Activated T-helper 1 cell treated with anti-CD3 and anti-CD28 coated beads, Interleukin-12 subunit alpha, Interleukin-12 subunit beta, Interleukin-2, Interleukin-4 antibody, amounts not matched to agents 30 ng/mL and 10 ng/mL and 1 ng/mL, durations not matched to agents 14 hours and 24 hours and 36 hours (primary cell): ENCODE measurements at regions of chr11 and their contacts with region 1.

Region 1: DNA sequence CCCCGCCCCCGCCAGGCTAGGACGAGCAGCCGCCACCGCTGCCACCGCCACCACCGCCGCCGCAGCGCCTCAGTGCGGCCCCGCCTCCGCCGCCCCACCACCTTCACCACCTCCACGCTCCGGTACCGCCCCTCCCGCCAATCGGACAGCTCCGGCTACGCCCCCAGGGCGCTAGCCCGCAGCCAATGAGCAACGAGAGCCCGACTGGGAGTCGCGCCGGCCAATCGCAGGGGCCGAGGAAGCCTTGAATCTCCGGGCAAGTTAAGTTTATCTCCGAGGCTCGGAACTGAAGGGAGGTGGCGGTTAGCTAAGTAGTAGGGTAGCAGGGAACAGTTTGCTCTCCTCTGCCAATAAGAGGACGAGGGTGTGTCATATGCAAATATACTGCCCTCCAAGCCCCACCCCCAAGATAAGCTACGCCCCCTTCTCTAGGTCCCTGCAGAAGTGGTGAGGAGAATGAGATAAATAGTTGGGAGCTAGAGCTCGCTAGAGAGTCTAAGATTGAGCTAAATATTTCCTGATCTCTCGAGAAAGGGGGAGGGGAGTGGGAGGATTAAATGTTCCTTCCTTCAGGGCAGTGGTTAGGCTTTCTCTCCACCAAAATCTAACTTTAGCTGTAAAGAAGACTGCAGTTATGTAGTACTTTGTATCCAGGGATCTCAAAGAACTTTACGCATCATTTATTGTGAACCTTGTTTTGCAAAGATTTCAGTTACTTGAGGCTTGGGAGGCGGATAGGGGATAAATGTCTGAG is at the start of gene SESN3:
- DNase-seq: peak; percentile 98
- H3K4me3 Mint-ChIP-seq: peak within 1 kb of the TSS; percentile 96
- H3K27ac Mint-ChIP-seq: peak within 1 kb of the TSS; percentile 88
- H3K4me1 Mint-ChIP-seq: peaks cover 18% of the 10 kb centered on the region
- H3K27me3 Mint-ChIP-seq: peaks cover 2% of the 10 kb centered on the region
- total RNA-seq, gene SESN3: 62.0 and 68.6 TPM in 2 replicates

Region 2: GRCh38 chr11:94128746-94129511 is 1102.4 kb before region 1 on chr11 and contains the start of gene PANX1:
- intact Hi-C with region 1: loop called (anchors 5 kb)
- DNase-seq: peak; percentile 73
- H3K4me3 Mint-ChIP-seq: no peak within 1 kb of the TSS
- H3K27ac Mint-ChIP-seq: peak within 1 kb of the TSS; percentile 88
- H3K4me1 Mint-ChIP-seq: peaks cover 20% of the 10 kb centered on the region
- H3K27me3 Mint-ChIP-seq: no peaks in the 10 kb centered on the region
- total RNA-seq, gene PANX1: 20.8 and 21.9 TPM in 2 replicates

Region 3: DNA sequence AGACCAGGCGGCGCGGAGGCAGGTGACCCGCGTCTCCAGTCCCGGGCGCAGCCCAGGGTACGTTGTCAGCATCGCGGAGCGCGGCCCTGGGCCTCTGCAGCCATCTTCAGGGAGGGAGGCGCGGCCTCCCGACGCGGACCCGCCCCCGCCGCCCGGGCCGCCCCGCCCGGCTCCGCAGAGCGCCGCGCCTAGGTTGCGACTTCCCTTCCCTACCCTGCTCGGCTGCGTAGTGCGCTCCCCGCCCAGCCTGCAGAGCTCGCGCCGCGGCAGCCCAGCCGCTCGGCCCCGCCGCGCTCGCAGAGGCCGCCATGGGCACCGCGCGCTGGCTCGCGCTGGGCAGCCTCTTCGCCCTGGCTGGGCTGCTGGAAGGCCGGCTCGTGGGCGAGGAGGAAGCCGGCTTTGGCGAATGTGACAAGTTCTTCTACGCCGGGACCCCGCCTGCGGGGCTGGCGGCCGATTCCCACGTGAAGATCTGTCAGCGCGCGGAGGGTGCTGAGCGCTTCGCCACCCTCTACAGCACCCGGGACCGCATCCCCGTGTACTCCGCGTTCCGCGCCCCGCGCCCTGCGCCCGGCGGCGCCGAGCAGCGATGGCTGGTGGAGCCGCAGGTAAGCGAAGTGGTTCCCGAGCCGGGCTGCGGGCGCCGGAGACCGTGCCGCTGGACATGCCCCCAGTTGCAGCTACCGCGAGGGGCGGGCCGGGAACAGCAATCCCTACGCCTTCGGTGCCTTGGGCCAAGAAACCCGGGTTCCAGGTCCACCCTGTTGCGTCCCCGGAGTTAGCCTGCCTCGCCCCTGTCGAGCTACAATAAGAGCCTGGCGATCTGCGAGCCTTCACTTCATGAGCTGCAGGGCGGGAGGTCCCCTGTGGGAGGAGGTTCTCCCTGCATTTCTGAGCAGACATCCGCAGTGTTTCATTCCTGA is 141.4 kb before region 1 on chr11 and contains the start of gene ENDOD1:
- intact Hi-C with region 1: loop called (anchors 1 kb)
- DNase-seq: peak; percentile 85
- H3K4me3 Mint-ChIP-seq: peak within 1 kb of the TSS; percentile 89
- H3K27ac Mint-ChIP-seq: peak within 1 kb of the TSS; percentile 96
- H3K4me1 Mint-ChIP-seq: peaks cover 83% of the 10 kb centered on the region
- H3K27me3 Mint-ChIP-seq: no peaks in the 10 kb centered on the region
- total RNA-seq, gene ENDOD1: 33.8 and 34.3 TPM in 2 replicates

Region 4: DNA sequence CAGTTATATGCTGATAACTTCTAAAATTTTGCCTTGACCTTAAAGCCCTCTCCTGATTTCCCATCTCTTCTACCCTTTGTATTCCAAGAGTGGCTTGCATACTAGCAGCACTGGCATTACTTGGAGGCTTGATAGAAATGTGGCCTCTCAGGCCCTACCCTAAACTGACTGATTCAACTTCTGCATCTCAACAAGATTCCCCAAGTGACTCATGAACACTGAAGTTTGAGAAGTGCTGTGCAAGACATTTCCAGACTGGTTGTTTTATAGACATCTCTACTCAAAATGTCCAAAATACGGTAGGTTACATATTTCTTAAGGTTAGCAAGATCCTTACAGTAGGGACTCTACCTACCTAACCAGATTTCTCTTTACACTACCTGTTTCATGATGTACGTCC is 48.9 kb before region 1 on chr11:
- intact Hi-C with region 1: no loop called
- DNase-seq: no peak
- H3K4me3 Mint-ChIP-seq: no peak overlapping the region
- H3K27ac Mint-ChIP-seq: no peak overlapping the region
- H3K4me1 Mint-ChIP-seq: peaks cover 7% of the 10 kb centered on the region
- H3K27me3 Mint-ChIP-seq: no peaks in the 10 kb centered on the region

Region 5: GRCh38 chr11:95296621-95297025 is 65.3 kb after region 1 on chr11:
- intact Hi-C with region 1: loop called (anchors 5 kb)
- DNase-seq: no peak
- H3K4me3 Mint-ChIP-seq: no peak overlapping the region
- H3K27ac Mint-ChIP-seq: no peak overlapping the region
- H3K4me1 Mint-ChIP-seq: peaks cover 24% of the 10 kb centered on the region
- H3K27me3 Mint-ChIP-seq: no peaks in the 10 kb centered on the region

Region 6: DNA sequence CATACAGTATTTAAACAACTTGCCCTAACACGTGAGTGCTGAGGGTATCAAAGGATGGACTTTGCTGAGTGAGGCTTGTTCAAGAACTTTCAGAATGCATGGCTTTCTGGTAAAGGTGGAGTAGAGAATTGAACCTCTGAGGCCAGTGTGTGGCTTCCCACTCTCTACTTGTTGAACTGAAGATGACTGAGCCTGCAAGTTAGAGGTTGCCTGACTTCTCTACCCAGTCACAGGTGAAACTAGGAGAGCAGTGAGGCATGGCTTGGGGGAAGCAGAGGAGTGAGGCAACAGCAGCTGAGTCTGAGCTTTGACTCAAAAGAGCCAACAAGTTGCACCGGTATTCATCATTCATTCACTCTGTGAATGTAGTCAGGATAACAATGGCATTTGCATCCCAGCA is 256.1 kb after region 1 on chr11:
- intact Hi-C with region 1: no loop called
- DNase-seq: no peak
- H3K4me3 Mint-ChIP-seq: no peak overlapping the region
- H3K27ac Mint-ChIP-seq: no peak overlapping the region
- H3K4me1 Mint-ChIP-seq: peaks cover 11% of the 10 kb centered on the region
- H3K27me3 Mint-ChIP-seq: peaks cover 13% of the 10 kb centered on the region

Region 7: GRCh38 chr11:95705485-95706124 is 474.3 kb after region 1 on chr11:
- intact Hi-C with region 1: loop called (anchors 1 kb)
- DNase-seq: peak; percentile 77
- H3K4me3 Mint-ChIP-seq: no peak overlapping the region
- H3K27ac Mint-ChIP-seq: no peak overlapping the region
- H3K4me1 Mint-ChIP-seq: peaks cover 17% of the 10 kb centered on the region
- H3K27me3 Mint-ChIP-seq: peaks cover 3% of the 10 kb centered on the region

Region 8: DNA sequence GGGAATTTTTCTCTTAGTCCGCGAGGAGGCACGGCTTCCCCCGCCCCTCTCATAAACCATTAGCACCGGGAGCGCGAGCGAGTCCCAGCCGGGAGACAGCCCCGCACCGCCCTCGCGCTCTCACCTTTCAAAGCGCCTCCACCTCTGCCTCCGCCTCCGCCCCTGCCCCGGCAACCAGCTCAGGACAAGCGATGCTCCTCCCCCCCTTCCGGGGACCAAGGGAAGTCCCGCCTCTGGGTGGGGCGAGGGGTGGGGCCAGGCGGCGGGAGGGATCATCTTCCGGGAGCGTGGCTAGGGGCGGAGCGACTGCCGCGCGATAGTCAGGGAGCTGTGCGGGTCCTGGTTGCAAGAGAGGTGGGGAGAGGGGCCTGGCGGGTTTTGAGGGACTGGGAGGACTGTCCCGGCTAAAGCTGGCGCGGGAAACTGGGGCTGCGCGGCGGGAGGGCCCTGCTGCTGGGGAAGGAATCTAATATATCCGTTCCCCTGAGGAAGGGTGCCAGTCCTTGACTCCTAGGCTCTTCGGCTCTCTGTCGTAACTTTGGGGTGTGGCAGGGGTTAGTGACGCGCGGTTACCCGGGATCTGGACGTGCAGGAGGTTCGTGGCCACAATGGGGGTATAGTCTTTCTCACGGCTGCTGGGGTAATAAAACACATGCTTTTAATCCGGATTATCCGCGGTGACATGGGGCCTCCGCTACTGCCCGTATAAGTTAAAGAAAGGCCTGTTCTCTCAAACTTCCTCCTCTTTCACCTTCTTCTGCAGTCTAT is 1158.6 kb after region 1 on chr11 and contains the starts of genes CCDC82 and JRKL:
- intact Hi-C with region 1: loop called (anchors 1 kb)
- DNase-seq: peak; percentile 97
- H3K4me3 Mint-ChIP-seq: peak within 1 kb of the TSS; percentile 95
- H3K27ac Mint-ChIP-seq: peak within 1 kb of the TSS; percentile 85
- H3K4me1 Mint-ChIP-seq: peaks cover 64% of the 10 kb centered on the region
- H3K27me3 Mint-ChIP-seq: no peaks in the 10 kb centered on the region
- total RNA-seq, gene CCDC82: 28.5 and 29.9 TPM in 2 replicates
- total RNA-seq, gene JRKL: 9.6 and 10.2 TPM in 2 replicates